MCF 10A (cell line): ENCODE measurements at regions of chr1 and their contacts with region 1.

Region 1: DNA sequence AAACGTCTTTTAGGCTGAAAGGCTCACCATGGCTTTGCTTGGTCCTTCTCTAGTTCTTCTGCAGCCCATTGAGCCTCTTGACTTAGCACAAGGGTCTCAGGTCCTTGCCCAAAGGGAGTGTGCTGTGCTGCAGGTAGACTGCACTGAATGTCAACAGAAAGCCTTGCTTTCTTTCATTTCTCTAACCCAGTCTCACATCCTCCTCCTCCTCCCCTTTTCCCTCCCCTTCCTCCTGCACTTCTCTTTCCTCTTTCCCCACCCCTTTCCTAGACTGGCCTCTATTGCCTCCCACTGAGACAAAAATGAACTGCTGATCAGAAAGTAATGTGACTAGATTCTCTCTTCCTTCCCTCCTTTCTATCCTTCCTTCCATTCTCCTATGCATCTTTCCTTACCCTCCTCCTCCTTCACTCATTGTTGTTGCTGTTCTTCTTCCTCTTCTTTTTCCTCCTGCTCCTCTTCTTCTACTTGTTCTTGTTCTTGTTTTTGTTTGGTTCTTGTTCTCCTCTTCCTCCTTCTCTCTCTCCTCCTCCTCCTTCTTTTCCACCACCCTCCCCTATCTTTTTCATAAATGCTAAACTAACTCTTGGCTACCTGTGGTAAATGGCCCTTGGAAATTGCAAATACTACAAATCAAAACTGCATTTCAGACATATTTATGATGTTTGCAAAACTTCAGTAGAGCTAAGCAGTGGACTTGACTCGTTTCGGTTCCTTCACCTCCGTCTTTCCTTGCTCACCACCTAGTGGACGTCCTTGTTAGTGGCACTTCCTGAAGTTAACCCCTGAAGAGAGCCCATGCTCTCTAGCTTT is at the start of gene SELL:
- DNase-seq: peak; percentile 90
- H3K4me3 Mint-ChIP-seq: peak within 1 kb of the TSS; percentile 58
- H3K27ac Mint-ChIP-seq: no peak within 1 kb of the TSS
- H3K4me1 Mint-ChIP-seq: peaks cover 7% of the 10 kb centered on the region
- H3K27me3 Mint-ChIP-seq: peaks cover 27% of the 10 kb centered on the region
- CTCF ChIP-seq: peak; percentile 85
- total RNA-seq, gene SELL: not detected in 2 replicates

Region 2: GRCh38 chr1:169161496-169162194 is 550.0 kb before region 1 on chr1:
- CTCF ChIA-PET with region 1: no interaction called
- POLR2A ChIA-PET with region 1: no interaction called
- intact Hi-C with region 1: no loop called
- DNase-seq: peak; percentile 45
- H3K4me3 Mint-ChIP-seq: no peak overlapping the region
- H3K27ac Mint-ChIP-seq: no peak overlapping the region
- H3K4me1 Mint-ChIP-seq: no peaks in the 10 kb centered on the region
- H3K27me3 Mint-ChIP-seq: no peaks in the 10 kb centered on the region
- CTCF ChIP-seq: no peak

Region 3: GRCh38 chr1:169466259-169467230 is 245.1 kb before region 1 on chr1:
- CTCF ChIA-PET with region 1: interaction called, 6 read pairs
- POLR2A ChIA-PET with region 1: no interaction called
- intact Hi-C with region 1: loop called (anchors 5 kb)
- DNase-seq: peak; percentile 72
- H3K4me3 Mint-ChIP-seq: no peak overlapping the region
- H3K27ac Mint-ChIP-seq: no peak overlapping the region
- H3K4me1 Mint-ChIP-seq: peaks cover 8% of the 10 kb centered on the region
- H3K27me3 Mint-ChIP-seq: no peaks in the 10 kb centered on the region
- CTCF ChIP-seq: peak; percentile 65

Region 4: GRCh38 chr1:169586395-169587255 is 125.0 kb before region 1 on chr1 and contains the start of gene F5:
- CTCF ChIA-PET with region 1: interaction called, 26 read pairs
- POLR2A ChIA-PET with region 1: interaction called, 8 read pairs
- intact Hi-C with region 1: no loop called
- DNase-seq: peak; percentile 79
- H3K4me3 Mint-ChIP-seq: peak within 1 kb of the TSS; percentile 45
- H3K27ac Mint-ChIP-seq: no peak within 1 kb of the TSS
- H3K4me1 Mint-ChIP-seq: no peaks in the 10 kb centered on the region
- H3K27me3 Mint-ChIP-seq: peaks cover 9% of the 10 kb centered on the region
- CTCF ChIP-seq: peak; percentile 35
- total RNA-seq, gene F5: 0.09 TPM in 1 of 2 replicates, not detected in the other

Region 5: DNA sequence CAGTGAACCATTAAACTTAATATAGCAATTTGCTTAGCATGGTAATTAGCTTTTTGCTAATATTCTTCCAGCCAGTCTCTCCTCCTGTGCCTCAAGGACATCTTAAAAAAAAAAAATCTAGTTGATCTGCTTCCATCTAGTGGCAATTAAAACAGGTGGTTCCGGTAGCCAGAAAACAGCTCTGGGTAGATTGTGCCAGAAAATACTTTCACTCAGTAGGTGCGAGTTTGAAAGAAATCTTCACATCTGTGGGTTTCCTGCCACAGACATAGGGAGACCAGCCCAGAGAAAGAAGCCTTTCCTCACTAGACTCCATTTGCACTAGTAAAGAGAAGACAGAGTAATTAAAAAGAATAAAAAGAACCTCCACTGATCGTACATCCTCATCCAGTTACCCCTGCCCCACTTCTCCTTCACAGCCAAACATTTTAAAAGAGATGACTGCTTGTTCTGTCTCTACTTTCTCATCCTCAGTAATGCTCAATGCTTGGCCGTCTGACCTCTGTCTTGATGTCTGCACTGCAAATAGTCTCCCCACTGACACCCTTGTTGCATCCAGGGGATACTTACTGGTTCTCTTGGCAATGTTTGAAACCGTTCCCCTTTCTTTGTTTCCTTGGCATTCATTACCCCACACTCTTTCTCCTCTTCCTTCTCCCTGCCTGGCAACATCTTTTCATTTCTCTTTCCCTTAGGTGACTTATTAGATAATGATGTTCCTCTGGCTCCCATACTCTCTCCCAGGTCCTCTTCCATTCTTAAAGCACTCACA is 17.2 kb before region 1 on chr1:
- CTCF ChIA-PET with region 1: interaction called, 16 read pairs
- POLR2A ChIA-PET with region 1: no interaction called
- intact Hi-C with region 1: no loop called
- DNase-seq: no peak
- H3K4me3 Mint-ChIP-seq: no peak overlapping the region
- H3K27ac Mint-ChIP-seq: no peak overlapping the region
- H3K4me1 Mint-ChIP-seq: no peaks in the 10 kb centered on the region
- H3K27me3 Mint-ChIP-seq: peaks cover 18% of the 10 kb centered on the region
- CTCF ChIP-seq: no peak

Region 6: GRCh38 chr1:169722776-169723175 is 11.1 kb after region 1 on chr1:
- CTCF ChIA-PET with region 1: interaction called, 21 read pairs
- POLR2A ChIA-PET with region 1: no interaction called
- intact Hi-C with region 1: no loop called
- DNase-seq: no peak
- H3K4me3 Mint-ChIP-seq: no peak overlapping the region
- H3K27ac Mint-ChIP-seq: no peak overlapping the region
- H3K4me1 Mint-ChIP-seq: no peaks in the 10 kb centered on the region
- H3K27me3 Mint-ChIP-seq: peaks cover 14% of the 10 kb centered on the region
- CTCF ChIP-seq: no peak